ENCODE measurements at regions of chr4 and their contacts with region 1.

Region 1: GRCh38 chr4:37603070-37603468 is 83.1 kb downstream of the RELL1 start:
- DNase-seq: peak; percentile 67 to 96 (median 86)
- ATAC-seq: peak; percentile 90 to 98 (median 95)
- H3K4me3 ChIP-seq: no peak overlapping the region
- H3K27ac ChIP-seq: no peak overlapping the region
- H3K4me1 ChIP-seq: no peaks in the 10 kb centered on the region
- H3K27me3 ChIP-seq: no peaks in the 10 kb centered on the region
- CTCF ChIP-seq: peak; percentile 90 to 96 (median 94)

Region 2: DNA sequence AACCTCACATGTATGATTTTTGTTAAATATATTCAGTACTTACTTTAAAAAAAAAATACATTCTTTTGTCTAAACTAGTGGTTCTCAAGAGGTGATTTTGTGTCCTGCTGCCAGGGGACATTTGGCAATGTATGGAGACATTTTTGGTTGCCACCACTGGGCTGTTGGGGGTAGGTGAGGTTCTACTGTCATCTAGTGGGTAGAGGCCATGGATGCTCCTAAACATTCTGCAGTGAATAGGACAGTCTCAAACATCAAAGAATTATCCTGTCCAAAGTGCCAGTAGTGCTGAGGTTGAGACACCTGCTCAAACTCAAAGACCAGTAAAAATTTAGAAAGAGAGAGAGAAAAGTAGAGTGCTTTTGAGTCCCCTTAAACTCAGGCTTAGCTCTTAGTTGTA is 190.5 kb after region 1 on chr4:
- intact Hi-C with region 1: loop called (anchors 5 to 10 kb)
- DNase-seq: peak in 1 of 6 donors; percentile 27
- ATAC-seq: peak in 3 of 4 donors; percentile 74 to 76 (median 76)
- H3K4me3 ChIP-seq: no peak overlapping the region
- H3K27ac ChIP-seq: no peak overlapping the region
- H3K4me1 ChIP-seq: no peaks in the 10 kb centered on the region
- H3K27me3 ChIP-seq: no peaks in the 10 kb centered on the region
- CTCF ChIP-seq: peak in 1 of 4 donors; percentile 17

Region 3: DNA sequence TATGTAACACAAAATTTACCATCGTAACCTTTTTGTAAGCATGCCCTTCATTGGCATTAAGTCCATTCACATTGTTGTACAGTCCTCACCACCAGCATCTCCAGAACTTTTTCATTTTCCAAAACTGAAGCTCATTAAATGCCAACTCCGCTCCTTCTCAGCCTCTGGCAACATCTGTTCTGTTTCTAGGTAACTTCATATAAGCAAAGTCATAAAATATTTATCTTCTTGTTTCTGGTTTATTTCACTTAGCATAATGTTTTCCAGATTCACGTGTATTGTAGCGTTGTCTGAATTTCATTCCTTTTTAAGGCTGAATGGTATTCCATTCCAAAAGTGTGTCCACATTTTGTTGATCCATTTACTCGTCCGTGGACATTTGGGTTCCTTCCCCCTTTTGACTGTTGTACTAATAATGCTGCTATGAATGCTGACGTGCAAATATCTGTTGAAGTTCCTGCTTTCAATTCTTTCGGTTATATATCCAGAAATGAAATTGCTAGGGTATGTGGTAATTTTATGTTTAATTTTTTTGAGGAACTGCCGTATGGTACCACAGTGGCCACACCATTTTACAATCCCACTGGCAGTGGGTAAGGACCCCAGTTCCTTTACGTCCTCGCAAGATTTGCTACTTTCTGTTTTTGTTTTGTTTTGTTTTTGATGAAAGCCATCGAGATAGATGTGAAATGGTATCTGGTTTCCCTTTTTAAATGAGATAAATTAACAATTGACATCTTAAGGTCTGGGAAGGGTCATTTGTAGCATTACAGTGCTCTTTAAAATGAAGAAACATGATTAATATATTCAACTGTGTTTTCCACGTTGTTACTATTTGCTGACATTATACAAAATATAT is 420.5 kb after region 1 on chr4:
- intact Hi-C with region 1: loop called in 1 of 3 experiments (anchors 10 kb)
- DNase-seq: no peak
- ATAC-seq: peak in 3 of 4 donors; percentile 21 to 64 (median 41)
- H3K4me3 ChIP-seq: no peak overlapping the region
- H3K27ac ChIP-seq: peak overlapping the region in 2 of 4 donors; percentile 9 to 21
- H3K4me1 ChIP-seq: peaks cover 0 to 9% (median 6%) of the 10 kb centered on the region in 3 donors
- H3K27me3 ChIP-seq: no peaks in the 10 kb centered on the region
- CTCF ChIP-seq: no peak

Region 4: GRCh38 chr4:38179690-38180377 is 576.8 kb after region 1 on chr4:
- intact Hi-C with region 1: no loop called
- DNase-seq: peak; percentile 76 to 87 (median 78)
- ATAC-seq: peak; percentile 74 to 80 (median 80)
- H3K4me3 ChIP-seq: no peak overlapping the region
- H3K27ac ChIP-seq: peak overlapping the region in 1 of 4 donors; percentile 57
- H3K4me1 ChIP-seq: peaks cover 10 to 20% (median 17%) of the 10 kb centered on the region in 3 donors
- H3K27me3 ChIP-seq: no peaks in the 10 kb centered on the region
- CTCF ChIP-seq: peak; percentile 68 to 88 (median 84)

Measured in pancreas (tissue), 10 donors.